Dendritic cell treated with granulocyte-macrophage colony-stimulating factor and Interleukin-4, amounts not matched to agents 40 ng/mL and 50 ng/mL, for 4 days (primary cell): ENCODE measurements at regions of chrX and their contacts with region 1.

Region 1: GRCh38 chrX:74286950-74287740 is 16.8 kb upstream of the ZCCHC13 start:
- H3K4me3 Mint-ChIP-seq: no peak overlapping the region
- H3K27ac Mint-ChIP-seq: no peak overlapping the region
- H3K4me1 Mint-ChIP-seq: peaks cover 12% of the 10 kb centered on the region
- H3K27me3 Mint-ChIP-seq: no peaks in the 10 kb centered on the region

Region 2: GRCh38 chrX:74232859-74233258 is 54.3 kb before region 1 on chrX:
- intact Hi-C with region 1: loop called (anchors 10 kb)
- H3K4me3 Mint-ChIP-seq: no peak overlapping the region
- H3K27ac Mint-ChIP-seq: no peak overlapping the region
- H3K4me1 Mint-ChIP-seq: no peaks in the 10 kb centered on the region
- H3K27me3 Mint-ChIP-seq: no peaks in the 10 kb centered on the region

Region 3: DNA sequence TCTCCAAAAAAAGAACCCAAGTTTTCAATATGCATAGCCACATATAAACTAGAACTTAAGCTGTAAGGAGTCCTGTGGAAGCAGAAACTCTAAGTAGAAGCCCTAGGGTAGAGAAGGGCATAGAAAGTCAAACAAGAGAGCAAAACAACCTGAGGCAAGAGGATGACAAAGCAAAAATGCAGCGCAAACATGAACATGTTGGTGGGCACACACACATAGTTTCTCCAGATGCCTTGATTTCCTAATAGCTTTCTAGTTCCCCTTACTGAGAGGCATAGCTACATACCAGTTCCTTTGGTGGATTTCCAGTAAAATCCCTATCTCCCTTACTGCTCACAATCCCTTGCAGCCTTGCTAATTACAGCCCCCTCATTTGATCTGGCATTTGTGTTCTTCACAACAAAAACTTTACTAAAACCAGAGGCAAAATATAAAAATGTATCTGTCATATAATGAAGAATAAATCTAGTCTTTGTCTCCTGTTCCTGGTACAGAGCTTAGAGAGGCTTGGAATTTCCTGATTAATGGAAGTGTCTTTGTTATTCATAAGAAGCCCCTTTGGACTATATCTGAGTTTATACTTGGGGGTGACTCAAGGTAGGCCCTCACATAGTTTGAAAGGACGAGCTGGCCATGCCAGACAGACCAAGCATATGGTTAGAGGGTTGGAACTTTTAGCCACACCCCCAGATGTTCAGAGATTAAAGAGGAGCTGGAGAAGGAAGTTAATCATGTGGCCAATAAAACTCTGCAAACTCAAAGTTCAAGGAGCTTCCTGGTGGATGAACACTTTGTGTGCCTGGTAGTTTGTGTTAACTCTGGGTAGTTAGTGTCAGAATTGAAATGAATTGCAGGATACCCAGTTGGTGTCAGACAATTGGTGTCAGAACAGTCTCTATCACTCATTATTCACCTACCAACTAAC is 35.9 kb before region 1 on chrX:
- intact Hi-C with region 1: loop called (anchors 5 kb)
- H3K4me3 Mint-ChIP-seq: no peak overlapping the region
- H3K27ac Mint-ChIP-seq: peak overlapping the region; percentile 86
- H3K4me1 Mint-ChIP-seq: peaks cover 34% of the 10 kb centered on the region
- H3K27me3 Mint-ChIP-seq: no peaks in the 10 kb centered on the region

Region 4: DNA sequence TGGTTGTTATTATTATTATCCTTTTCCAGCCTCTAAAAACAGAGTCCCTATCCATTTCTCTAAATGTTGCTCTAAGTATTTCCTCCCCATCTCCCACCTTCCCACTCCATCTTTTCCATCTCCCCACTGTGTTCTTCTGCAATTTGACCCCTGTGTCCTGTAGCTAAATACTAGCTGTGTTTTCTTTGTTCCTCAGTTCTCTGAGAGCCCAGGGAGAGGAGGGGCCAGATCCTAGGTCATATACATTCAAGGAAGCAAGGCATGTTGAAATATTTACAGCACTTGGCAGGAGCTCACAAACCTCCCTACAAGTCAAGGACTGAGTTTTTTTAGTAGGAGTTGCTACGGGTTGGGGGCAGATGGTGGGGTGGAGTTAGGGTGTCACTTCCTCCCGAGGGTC is 144.7 kb after region 1 on chrX:
- intact Hi-C with region 1: no loop called
- H3K4me3 Mint-ChIP-seq: no peak overlapping the region
- H3K27ac Mint-ChIP-seq: no peak overlapping the region
- H3K4me1 Mint-ChIP-seq: no peaks in the 10 kb centered on the region
- H3K27me3 Mint-ChIP-seq: peaks cover 2% of the 10 kb centered on the region

Region 5: DNA sequence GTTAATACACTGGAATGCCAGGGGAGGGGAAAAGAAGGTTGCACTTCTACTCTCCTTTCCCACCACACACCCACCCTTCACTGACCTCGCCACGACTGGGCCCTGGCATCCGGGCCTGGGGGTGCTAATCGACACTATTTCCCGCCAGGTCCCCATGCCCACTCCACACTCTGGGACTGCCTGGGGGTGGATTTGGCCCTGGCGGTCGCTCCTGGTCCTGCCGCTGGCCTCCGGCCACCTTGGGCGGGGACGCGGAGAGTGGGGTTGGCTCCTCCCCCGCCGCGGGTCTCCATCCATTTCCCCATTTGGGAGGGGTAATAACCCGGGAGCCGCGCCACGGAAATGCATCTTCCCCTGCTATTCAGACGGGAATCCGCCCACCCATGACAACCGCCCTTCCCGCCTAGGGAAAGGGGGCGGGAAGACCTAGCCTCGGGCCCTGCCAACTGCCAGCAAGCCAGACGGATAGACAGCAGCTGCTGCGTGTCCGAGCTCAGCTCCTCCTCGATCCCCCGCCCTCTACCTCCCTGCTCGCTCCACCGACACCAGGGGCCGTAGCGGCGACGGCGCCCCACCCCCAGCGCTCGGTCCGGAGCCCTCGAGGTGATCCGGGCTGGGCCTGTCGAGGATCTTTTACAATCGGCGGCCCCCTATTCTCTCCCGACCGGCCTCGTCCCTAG is 249.1 kb after region 1 on chrX:
- intact Hi-C with region 1: loop called (anchors 10 kb)
- H3K4me3 Mint-ChIP-seq: peak overlapping the region; percentile 70
- H3K27ac Mint-ChIP-seq: peak overlapping the region; percentile 37
- H3K4me1 Mint-ChIP-seq: peaks cover 15% of the 10 kb centered on the region
- H3K27me3 Mint-ChIP-seq: peaks cover 3% of the 10 kb centered on the region